GM18951 (cell line): ENCODE measurements at regions of chr11 and their contacts with region 1.

Region 1: DNA sequence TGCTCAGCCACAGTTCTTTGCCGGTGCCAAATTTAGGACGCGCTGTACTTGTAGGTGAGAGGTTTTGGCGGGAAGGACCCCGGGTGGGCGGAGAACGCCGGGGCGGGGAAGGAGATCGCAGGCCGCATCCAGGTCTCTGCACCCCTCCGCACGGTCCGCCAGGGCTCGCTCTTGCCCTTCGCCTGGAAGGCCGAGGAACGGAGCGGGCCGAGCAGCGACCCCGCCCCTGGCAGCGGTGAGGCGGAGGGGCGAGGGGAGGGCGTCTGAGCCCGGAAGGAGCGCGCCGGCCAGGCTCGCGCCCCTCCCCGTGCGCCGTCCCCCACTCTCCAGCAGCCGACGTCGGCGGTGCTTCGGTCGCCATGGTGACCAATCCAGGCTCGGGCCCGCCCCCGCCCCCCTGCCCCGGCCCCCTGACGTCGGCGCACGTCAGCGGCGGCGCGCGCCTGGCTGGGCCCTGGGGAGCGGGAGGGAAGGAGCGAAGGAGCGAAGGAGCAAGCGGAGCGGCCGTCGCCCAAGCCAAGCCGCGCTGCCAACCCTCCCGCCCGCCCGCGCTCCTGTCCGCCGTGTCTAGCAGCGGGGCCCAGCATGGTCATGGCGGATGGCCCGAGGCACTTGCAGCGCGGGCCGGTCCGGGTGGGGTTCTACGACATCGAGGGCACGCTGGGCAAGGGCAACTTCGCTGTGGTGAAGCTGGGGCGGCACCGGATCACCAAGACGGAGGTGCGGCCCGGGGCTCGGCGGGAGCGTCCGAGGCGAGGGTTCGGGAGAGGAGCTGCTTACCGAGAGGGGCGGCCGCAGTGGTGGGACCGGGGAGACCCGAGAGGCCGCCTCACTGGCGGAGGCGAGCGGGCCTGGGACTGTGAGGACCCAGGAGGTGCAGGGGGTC is at the start of gene SIK2:
- POLR2A ChIP-seq: peak; percentile 43

Region 2: GRCh38 chr11:111766093-111766833 is 164.0 kb after region 1 on chr11 and contains the start of gene PPP2R1B:
- in situ Hi-C with region 1: loop called (anchors 5 kb)
- POLR2A ChIP-seq: peak; percentile 75

Region 3: DNA sequence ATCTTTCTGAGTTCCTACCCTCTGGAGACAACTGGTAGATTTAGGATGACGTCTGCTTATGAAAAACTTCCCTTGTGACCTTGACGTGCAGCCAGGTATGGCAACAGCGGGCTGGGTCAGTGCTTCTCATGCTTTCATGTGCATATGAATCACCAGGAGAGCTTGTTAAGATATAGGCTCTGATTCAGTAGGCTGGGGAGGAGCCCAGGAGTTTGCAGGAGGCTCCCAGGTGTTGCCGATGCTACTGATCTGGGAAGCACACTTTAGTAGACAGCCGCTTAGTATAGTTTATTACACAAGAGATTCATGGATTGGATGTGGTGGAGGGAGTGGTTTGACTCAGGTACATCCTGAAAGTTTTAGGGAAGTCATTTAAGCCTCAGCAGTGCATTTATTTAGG is 358.7 kb after region 1 on chr11:
- in situ Hi-C with region 1: no loop called
- POLR2A ChIP-seq: no peak